Activated B cell treated with CpG ODN at 0.5 μM for 24 hours (primary cell): ENCODE measurements at regions of chr10 and their contacts with region 1.

Region 1: GRCh38 chr10:101818119-101818871 is at the start of gene OGA:
- DNase-seq: peak; percentile 91
- ATAC-seq: peak; percentile 86
- H3K4me3 Mint-ChIP-seq: peak within 1 kb of the TSS; percentile 98
- H3K27ac Mint-ChIP-seq: peak within 1 kb of the TSS; percentile 99
- H3K4me1 Mint-ChIP-seq: peaks cover 42% of the 10 kb centered on the region
- H3K27me3 Mint-ChIP-seq: no peaks in the 10 kb centered on the region
- CTCF ChIP-seq: no peak
- total RNA-seq, gene OGA: 209 and 271 TPM in 2 replicates

Region 2: GRCh38 chr10:101797403-101798059 is 20.8 kb before region 1 on chr10:
- CTCF ChIA-PET with region 1: no interaction called
- POLR2A ChIA-PET with region 1: interaction called, 4 read pairs
- intact Hi-C with region 1: loop called (anchors 2 kb)
- DNase-seq: no peak
- ATAC-seq: no peak
- H3K4me3 Mint-ChIP-seq: no peak overlapping the region
- H3K27ac Mint-ChIP-seq: no peak overlapping the region
- H3K4me1 Mint-ChIP-seq: peaks cover 5% of the 10 kb centered on the region
- H3K27me3 Mint-ChIP-seq: no peaks in the 10 kb centered on the region
- CTCF ChIP-seq: no peak

Region 3: DNA sequence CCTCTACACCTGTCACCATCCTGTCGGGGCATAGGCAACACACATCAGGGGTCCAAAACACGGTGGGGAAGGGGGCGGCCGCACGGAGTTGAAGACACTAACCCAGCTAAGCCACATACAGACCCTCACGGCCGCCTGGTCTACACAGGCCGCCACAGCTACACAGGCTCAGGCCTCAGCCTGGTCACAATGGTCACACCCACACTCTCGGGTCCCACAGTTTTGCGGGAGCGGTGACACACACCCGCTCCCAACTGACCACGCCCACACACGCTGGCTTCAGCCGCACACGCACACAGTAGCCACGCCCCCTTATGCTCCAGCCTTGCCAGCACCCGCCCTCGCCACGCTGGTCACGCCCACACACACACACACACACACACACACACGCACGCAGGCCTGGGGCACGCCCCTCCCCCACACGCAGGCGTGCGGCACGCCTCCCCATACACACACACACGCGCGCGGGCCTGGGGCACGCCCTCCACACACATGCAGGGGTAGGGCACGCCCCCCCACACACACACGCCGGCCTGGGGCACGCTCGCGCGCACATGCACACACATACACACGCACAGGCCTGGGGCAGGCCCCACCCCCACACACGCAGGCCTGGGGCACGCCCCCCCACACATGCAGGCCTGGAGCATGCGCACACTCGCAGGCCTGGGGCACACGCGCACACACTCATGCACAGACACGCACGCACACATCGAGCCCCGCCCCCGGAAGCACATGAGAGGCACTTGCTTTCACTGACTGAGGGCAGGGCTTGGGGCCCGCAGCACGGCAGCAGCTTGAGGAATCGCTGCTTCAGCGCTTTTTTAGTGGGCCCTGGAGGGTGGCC is 12.2 kb after region 1 on chr10:
- CTCF ChIA-PET with region 1: interaction called, 6 read pairs
- POLR2A ChIA-PET with region 1: interaction called, 96 read pairs
- intact Hi-C with region 1: loop called (anchors 1 kb)
- DNase-seq: peak; percentile 89
- ATAC-seq: peak; percentile 75
- H3K4me3 Mint-ChIP-seq: peak overlapping the region; percentile 80
- H3K27ac Mint-ChIP-seq: peak overlapping the region; percentile 97
- H3K4me1 Mint-ChIP-seq: peaks cover 41% of the 10 kb centered on the region
- H3K27me3 Mint-ChIP-seq: no peaks in the 10 kb centered on the region
- CTCF ChIP-seq: no peak

Region 4: DNA sequence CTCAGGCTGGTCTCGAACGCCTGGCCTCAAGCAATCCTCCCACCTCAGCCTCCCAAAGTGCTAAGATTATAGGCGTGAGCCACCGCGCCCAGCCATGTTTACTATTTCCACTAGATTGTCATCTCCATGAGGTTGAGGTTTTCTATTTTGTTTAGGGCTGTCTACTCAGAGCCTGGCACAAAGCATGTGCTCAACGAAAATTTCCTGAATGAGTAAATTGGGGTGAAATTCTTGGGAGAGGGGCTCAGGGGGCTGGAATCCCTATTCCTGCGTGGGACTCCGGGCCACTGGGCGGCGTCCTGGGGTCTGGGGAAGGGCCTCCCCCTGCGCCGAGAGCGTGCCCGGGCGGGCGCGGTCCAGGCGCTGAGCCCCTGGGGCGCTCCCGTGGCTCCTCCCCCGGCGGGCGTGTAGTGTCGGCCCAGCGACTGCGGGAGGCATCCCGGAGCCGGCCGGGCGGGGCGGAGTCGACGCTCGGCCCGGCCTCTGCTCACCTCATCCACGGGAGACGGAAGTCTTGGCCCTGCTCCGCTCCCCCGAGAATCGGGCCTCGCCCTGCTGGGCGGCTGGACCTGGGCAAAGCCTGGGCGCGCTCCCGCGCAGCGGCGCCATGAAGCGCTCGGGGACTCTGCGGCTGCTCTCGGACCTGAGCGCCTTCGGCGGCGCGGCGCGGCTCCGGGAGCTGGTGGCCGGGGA is 246.7 kb after region 1 on chr10 and contains the start of gene HPS6:
- CTCF ChIA-PET with region 1: no interaction called
- POLR2A ChIA-PET with region 1: interaction called, 5 read pairs
- intact Hi-C with region 1: loop called (anchors 1 kb)
- DNase-seq: peak; percentile 88
- ATAC-seq: peak; percentile 97
- H3K4me3 Mint-ChIP-seq: peak within 1 kb of the TSS; percentile 89
- H3K27ac Mint-ChIP-seq: peak within 1 kb of the TSS; percentile 90
- H3K4me1 Mint-ChIP-seq: peaks cover 24% of the 10 kb centered on the region
- H3K27me3 Mint-ChIP-seq: no peaks in the 10 kb centered on the region
- CTCF ChIP-seq: no peak
- total RNA-seq, gene HPS6: 22.8 and 23.0 TPM in 2 replicates

Region 5: DNA sequence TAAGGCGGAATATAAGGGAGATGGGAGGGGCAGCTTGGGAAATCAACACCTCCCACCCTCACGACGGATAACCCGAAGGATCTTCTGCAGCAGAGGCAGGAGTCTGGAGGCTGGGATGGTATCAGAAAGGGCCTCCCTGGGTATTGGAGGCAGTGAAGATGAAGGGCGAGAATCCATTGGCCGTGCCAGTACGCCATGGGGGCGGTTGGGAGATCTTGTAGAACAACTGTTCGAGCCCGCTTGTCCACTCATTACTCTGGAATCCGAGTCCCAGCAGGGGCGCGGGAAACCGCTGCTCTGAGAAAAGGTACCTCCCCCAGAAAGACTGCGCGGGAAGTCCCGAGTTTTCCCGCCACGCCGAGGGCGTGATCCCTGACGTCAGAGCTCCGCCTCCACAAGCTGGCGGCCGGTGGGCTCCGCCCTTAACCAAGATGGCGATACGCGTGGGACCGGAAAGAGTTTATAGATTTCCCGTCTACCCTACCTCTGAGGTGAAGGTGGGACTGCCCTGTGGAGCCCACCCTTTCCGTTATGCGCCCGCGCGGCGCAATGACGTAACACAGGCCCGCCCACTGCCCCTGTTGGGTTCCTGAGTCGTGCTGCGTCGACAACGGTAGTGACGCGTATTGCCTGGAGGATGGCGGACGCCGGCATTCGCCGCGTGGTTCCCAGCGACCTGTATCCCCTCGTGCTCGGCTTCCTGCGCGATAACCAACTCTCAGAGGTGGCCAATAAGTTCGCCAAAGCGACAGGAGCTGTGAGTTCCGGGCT is 333.7 kb after region 1 on chr10 and contains the start of gene NOLC1:
- CTCF ChIA-PET with region 1: no interaction called
- POLR2A ChIA-PET with region 1: interaction called, 5 read pairs
- intact Hi-C with region 1: loop called (anchors 1 kb)
- DNase-seq: peak; percentile 99
- ATAC-seq: peak; percentile 96
- H3K4me3 Mint-ChIP-seq: peak within 1 kb of the TSS; percentile 97
- H3K27ac Mint-ChIP-seq: peak within 1 kb of the TSS; percentile 93
- H3K4me1 Mint-ChIP-seq: peaks cover 35% of the 10 kb centered on the region
- H3K27me3 Mint-ChIP-seq: no peaks in the 10 kb centered on the region
- CTCF ChIP-seq: no peak
- total RNA-seq, gene NOLC1: 95.1 and 106 TPM in 2 replicates